Activated naive CD4-positive, alpha-beta T cell treated with anti-CD3 and anti-CD28 coated beads for 36 hours (primary cell): ENCODE measurements at regions of chr22 and their contacts with region 1.

Region 1: DNA sequence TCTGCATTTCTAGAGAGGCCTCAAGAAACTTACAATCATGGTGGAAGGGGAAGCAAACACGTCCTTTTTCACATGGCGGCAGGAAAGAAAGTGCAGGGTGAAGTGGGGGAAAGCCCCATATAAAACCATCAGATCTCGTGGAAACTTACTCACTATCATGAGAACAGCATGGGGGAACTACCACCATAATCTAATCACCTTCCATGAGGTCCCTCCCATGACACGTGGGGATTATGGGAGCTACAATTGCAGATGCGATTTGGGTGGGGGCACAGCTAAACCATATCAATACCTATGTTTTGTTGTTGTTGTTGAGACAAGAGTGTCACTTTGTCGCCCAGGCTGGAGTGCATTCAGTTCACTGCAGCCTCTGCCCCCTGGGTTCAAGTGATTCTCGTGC is 29.9 kb downstream of the SFI1 start:
- DNase-seq: peak; percentile 76
- H3K4me3 Mint-ChIP-seq: no peak overlapping the region
- H3K27ac Mint-ChIP-seq: peak overlapping the region; percentile 94
- H3K4me1 Mint-ChIP-seq: peaks cover 65% of the 10 kb centered on the region
- H3K27me3 Mint-ChIP-seq: no peaks in the 10 kb centered on the region

Region 2: GRCh38 chr22:30649430-30650007 is 876.8 kb before region 1 on chr22:
- CTCF ChIA-PET with region 1: no interaction called
- intact Hi-C with region 1: loop called (anchors 10 kb)
- DNase-seq: peak; percentile 95
- H3K4me3 Mint-ChIP-seq: no peak overlapping the region
- H3K27ac Mint-ChIP-seq: peak overlapping the region; percentile 75
- H3K4me1 Mint-ChIP-seq: peaks cover 28% of the 10 kb centered on the region
- H3K27me3 Mint-ChIP-seq: no peaks in the 10 kb centered on the region

Region 3: GRCh38 chr22:31489604-31490495 is 36.4 kb before region 1 on chr22 and contains the start of gene EIF4ENIF1:
- CTCF ChIA-PET with region 1: no interaction called
- intact Hi-C with region 1: loop called (anchors 1 kb)
- DNase-seq: peak; percentile 88
- H3K4me3 Mint-ChIP-seq: peak within 1 kb of the TSS; percentile 83
- H3K27ac Mint-ChIP-seq: peak within 1 kb of the TSS; percentile 97
- H3K4me1 Mint-ChIP-seq: peaks cover 50% of the 10 kb centered on the region
- H3K27me3 Mint-ChIP-seq: no peaks in the 10 kb centered on the region
- total RNA-seq, gene EIF4ENIF1: 28.1 to 29.0 TPM

Region 4: DNA sequence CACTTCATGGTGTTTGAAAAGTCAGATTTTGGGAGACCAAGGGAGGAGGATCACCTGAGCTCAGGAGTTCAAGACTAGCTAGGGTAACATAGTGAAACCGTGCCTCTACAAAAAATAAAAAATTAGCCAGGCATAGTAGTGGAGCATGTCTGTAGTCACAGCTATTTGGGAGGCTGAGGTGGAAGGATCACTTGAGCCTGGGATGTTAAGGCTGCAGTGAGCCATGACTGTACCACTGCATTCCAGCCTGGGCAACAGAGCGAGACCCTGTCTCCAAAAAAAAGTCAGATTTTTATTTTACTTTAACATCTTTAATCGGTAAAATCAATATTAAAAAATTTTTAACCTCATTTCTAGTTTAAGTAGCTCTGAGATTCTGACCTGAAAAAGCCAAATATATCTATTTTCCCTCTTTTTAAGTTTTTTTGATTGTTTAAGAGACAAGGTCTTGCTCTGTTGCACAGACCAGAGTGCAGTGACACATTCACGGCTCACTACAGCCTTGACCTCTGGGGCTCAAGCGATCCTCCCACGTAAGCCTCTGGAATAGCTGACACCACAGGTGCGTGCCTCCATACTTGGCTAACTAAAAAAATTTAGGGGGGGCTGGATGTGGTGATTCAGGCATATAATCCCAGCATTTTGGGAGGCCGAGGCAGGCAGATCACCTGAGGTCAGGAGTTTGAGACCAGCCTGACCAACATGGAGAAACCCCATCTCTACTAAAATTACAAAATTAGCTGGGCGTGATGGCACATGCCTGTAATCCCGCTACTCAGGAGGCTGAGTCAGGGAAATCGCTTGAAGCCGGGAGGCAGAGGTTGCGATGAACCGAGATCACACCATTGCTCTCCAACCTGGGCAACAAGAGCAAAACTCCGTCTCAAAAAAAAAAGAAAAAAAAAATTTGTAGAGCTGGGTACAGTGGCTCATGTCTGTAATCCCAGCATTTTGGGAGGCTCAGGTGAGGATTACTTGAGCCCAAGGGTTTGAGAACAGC is 18.5 kb after region 1 on chr22:
- CTCF ChIA-PET with region 1: no interaction called
- intact Hi-C with region 1: no loop called
- DNase-seq: no peak
- H3K4me3 Mint-ChIP-seq: no peak overlapping the region
- H3K27ac Mint-ChIP-seq: no peak overlapping the region
- H3K4me1 Mint-ChIP-seq: peaks cover 23% of the 10 kb centered on the region
- H3K27me3 Mint-ChIP-seq: no peaks in the 10 kb centered on the region

Region 5: GRCh38 chr22:31585161-31585859 is 59.0 kb after region 1 on chr22:
- CTCF ChIA-PET with region 1: interaction called, 4 read pairs
- intact Hi-C with region 1: loop called (anchors 1 kb)
- DNase-seq: peak; percentile 28
- H3K4me3 Mint-ChIP-seq: no peak overlapping the region
- H3K27ac Mint-ChIP-seq: no peak overlapping the region
- H3K4me1 Mint-ChIP-seq: peaks cover 50% of the 10 kb centered on the region
- H3K27me3 Mint-ChIP-seq: no peaks in the 10 kb centered on the region

Region 6: GRCh38 chr22:31661851-31662656 is 135.8 kb after region 1 on chr22 and contains the start of gene PISD:
- CTCF ChIA-PET with region 1: no interaction called
- intact Hi-C with region 1: no loop called
- DNase-seq: peak; percentile 97
- H3K4me3 Mint-ChIP-seq: peak within 1 kb of the TSS; percentile 91
- H3K27ac Mint-ChIP-seq: peak within 1 kb of the TSS; percentile 84
- H3K4me1 Mint-ChIP-seq: peaks cover 38% of the 10 kb centered on the region
- H3K27me3 Mint-ChIP-seq: no peaks in the 10 kb centered on the region
- total RNA-seq, gene PISD: 45.6 to 45.7 TPM